Colonic mucosa (tissue), 4 donors: ENCODE measurements at regions of chr3 and their contacts with region 1.

Region 1: GRCh38 chr3:88003115-88003755 is 55.6 kb downstream of the CGGBP1 start:
- DNase-seq: peak; percentile 26
- H3K4me3 ChIP-seq: no peak overlapping the region
- H3K27ac ChIP-seq: no peak overlapping the region
- H3K4me1 ChIP-seq: no peaks in the 10 kb centered on the region
- H3K27me3 ChIP-seq: no peaks in the 10 kb centered on the region
- CTCF ChIP-seq: peak; percentile 72

Region 2: GRCh38 chr3:87446849-87447387 is 556.3 kb before region 1 on chr3:
- intact Hi-C with region 1: no loop called
- DNase-seq: no peak
- H3K4me3 ChIP-seq: no peak overlapping the region
- H3K27ac ChIP-seq: no peak overlapping the region
- H3K4me1 ChIP-seq: no peaks in the 10 kb centered on the region
- H3K27me3 ChIP-seq: no peaks in the 10 kb centered on the region
- CTCF ChIP-seq: no peak

Region 3: GRCh38 chr3:87771341-87772192 is 231.7 kb before region 1 on chr3:
- intact Hi-C with region 1: loop called (anchors 10 kb)
- DNase-seq: peak; percentile 20
- H3K4me3 ChIP-seq: no peak overlapping the region
- H3K27ac ChIP-seq: no peak overlapping the region
- H3K4me1 ChIP-seq: no peaks in the 10 kb centered on the region
- H3K27me3 ChIP-seq: no peaks in the 10 kb centered on the region
- CTCF ChIP-seq: peak; percentile 39

Region 4: GRCh38 chr3:87895983-87896382 is 107.3 kb before region 1 on chr3:
- intact Hi-C with region 1: loop called (anchors 10 kb)
- DNase-seq: no peak
- H3K4me3 ChIP-seq: no peak overlapping the region
- H3K27ac ChIP-seq: no peak overlapping the region
- H3K4me1 ChIP-seq: no peaks in the 10 kb centered on the region
- H3K27me3 ChIP-seq: no peaks in the 10 kb centered on the region
- CTCF ChIP-seq: no peak

Region 5: GRCh38 chr3:88113311-88114162 is 110.3 kb after region 1 on chr3:
- intact Hi-C with region 1: loop called (anchors 10 kb)
- DNase-seq: peak; percentile 73
- H3K4me3 ChIP-seq: no peak overlapping the region
- H3K27ac ChIP-seq: no peak overlapping the region
- H3K4me1 ChIP-seq: no peaks in the 10 kb centered on the region
- H3K27me3 ChIP-seq: no peaks in the 10 kb centered on the region
- CTCF ChIP-seq: peak; percentile 54